IMR-90 (cell line): ENCODE measurements at regions of chr13 and their contacts with region 1.

Region 1: GRCh38 chr13:107124129-107124718 is 556.3 kb upstream of the ARGLU1 start:
- DNase-seq: peak; percentile 36
- ATAC-seq: peak; percentile 66; the same call in 1 of the 2 replicates
- H3K4me3 ChIP-seq: no peak overlapping the region
- H3K27ac ChIP-seq: no peak overlapping the region
- H3K4me1 ChIP-seq: no peaks in the 10 kb centered on the region
- H3K27me3 ChIP-seq: peaks cover 5% of the 10 kb centered on the region
- CTCF ChIP-seq: peak; percentile 79
- POLR2A ChIP-seq: no peak
- RAD21 ChIP-seq: peak; percentile 88

Region 2: GRCh38 chr13:106555631-106556328 is 568.4 kb before region 1 on chr13:
- CTCF ChIA-PET with region 1: no interaction called
- POLR2A ChIA-PET with region 1: no interaction called
- dilution Hi-C with region 1: no loop called
- in situ Hi-C with region 1: loop called (anchors 10 kb)
- intact Hi-C with region 1: no loop called
- DNase-seq: peak; percentile 68
- ATAC-seq: peak; percentile 66
- H3K4me3 ChIP-seq: no peak overlapping the region
- H3K27ac ChIP-seq: peak overlapping the region; percentile 23; the same call in 1 of the 2 replicates
- H3K4me1 ChIP-seq: peaks cover 8% of the 10 kb centered on the region
- H3K27me3 ChIP-seq: no peaks in the 10 kb centered on the region
- CTCF ChIP-seq: no peak
- POLR2A ChIP-seq: no peak
- RAD21 ChIP-seq: no peak

Region 3: GRCh38 chr13:106567474-106568298 is 556.5 kb before region 1 on chr13 and contains the start of gene ARGLU1:
- CTCF ChIA-PET with region 1: no interaction called
- POLR2A ChIA-PET with region 1: no interaction called
- dilution Hi-C with region 1: no loop called
- in situ Hi-C with region 1: no loop called
- intact Hi-C with region 1: loop called (anchors 5 kb)
- DNase-seq: peak; percentile 90
- ATAC-seq: peak; percentile 86
- H3K4me3 ChIP-seq: peak within 1 kb of the TSS; percentile 85
- H3K27ac ChIP-seq: peak within 1 kb of the TSS; percentile 99
- H3K4me1 ChIP-seq: peaks cover 14% of the 10 kb centered on the region
- H3K27me3 ChIP-seq: no peaks in the 10 kb centered on the region
- CTCF ChIP-seq: no peak
- POLR2A ChIP-seq: peak; percentile 93
- RAD21 ChIP-seq: no peak
- total RNA-seq, gene ARGLU1: 11.1 and 28.1 TPM in 2 replicates

Region 4: GRCh38 chr13:106619688-106620555 is 504.3 kb before region 1 on chr13:
- CTCF ChIA-PET with region 1: no interaction called
- POLR2A ChIA-PET with region 1: no interaction called
- dilution Hi-C with region 1: no loop called
- in situ Hi-C with region 1: no loop called
- intact Hi-C with region 1: loop called (anchors 1 kb)
- DNase-seq: peak; percentile 69
- ATAC-seq: peak; percentile 98
- H3K4me3 ChIP-seq: no peak overlapping the region
- H3K27ac ChIP-seq: no peak overlapping the region
- H3K4me1 ChIP-seq: no peaks in the 10 kb centered on the region
- H3K27me3 ChIP-seq: peaks cover 21% of the 10 kb centered on the region
- CTCF ChIP-seq: peak; percentile 82
- POLR2A ChIP-seq: no peak
- RAD21 ChIP-seq: peak; percentile 75

Region 5: GRCh38 chr13:106917673-106918556 is 206.3 kb before region 1 on chr13:
- CTCF ChIA-PET with region 1: interaction called, 3 read pairs
- POLR2A ChIA-PET with region 1: no interaction called
- dilution Hi-C with region 1: no loop called
- in situ Hi-C with region 1: loop called (anchors 25 kb)
- intact Hi-C with region 1: loop called (anchors 1 kb)
- DNase-seq: peak; percentile 61
- ATAC-seq: peak; percentile 98
- H3K4me3 ChIP-seq: peak overlapping the region; percentile 70
- H3K27ac ChIP-seq: peak overlapping the region; percentile 36; the same call in 1 of the 2 replicates
- H3K4me1 ChIP-seq: no peaks in the 10 kb centered on the region
- H3K27me3 ChIP-seq: no peaks in the 10 kb centered on the region; the same call in none of the 2 replicates
- CTCF ChIP-seq: peak; percentile 94
- POLR2A ChIP-seq: no peak
- RAD21 ChIP-seq: peak; percentile 73

Region 6: DNA sequence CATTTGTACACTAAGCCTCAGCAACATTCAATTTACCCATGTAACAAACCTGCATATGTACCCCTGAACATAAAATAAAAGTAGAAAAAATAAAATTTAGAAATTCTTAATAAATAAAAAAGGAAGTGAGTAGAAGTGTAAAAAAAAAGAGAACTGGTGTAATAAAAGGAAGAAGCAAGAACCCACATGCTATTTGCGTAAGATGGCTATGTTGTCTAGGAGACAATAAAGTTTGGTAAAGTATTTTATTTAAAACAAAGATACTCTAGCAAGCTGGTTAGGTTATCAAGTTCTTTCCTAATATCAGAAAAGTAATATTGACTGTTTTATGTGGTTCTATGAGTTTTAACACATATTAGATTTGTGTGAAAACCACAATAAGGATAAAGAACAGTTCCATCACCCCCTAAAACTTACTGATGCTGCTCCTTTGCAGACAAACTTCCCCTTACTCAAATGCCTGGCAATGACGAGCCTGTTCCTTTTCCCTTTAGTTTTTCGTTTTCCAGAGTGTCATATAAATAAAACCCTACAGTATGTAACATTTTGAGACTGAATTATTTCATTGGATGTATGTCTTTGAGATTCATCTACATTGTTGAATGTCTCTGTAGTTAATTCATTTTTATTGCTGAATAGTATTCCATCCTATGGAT is 1244.2 kb after region 1 on chr13:
- CTCF ChIA-PET with region 1: no interaction called
- POLR2A ChIA-PET with region 1: no interaction called
- dilution Hi-C with region 1: no loop called
- in situ Hi-C with region 1: no loop called
- intact Hi-C with region 1: no loop called
- DNase-seq: no peak
- ATAC-seq: no peak
- H3K4me3 ChIP-seq: no peak overlapping the region
- H3K27ac ChIP-seq: no peak overlapping the region
- H3K4me1 ChIP-seq: no peaks in the 10 kb centered on the region
- H3K27me3 ChIP-seq: no peaks in the 10 kb centered on the region
- CTCF ChIP-seq: no peak
- POLR2A ChIP-seq: no peak
- RAD21 ChIP-seq: no peak